CD4-positive, alpha-beta T cell (primary cell): ENCODE measurements at regions of chr13 and their contacts with region 1.

Region 1: GRCh38 chr13:84446972-84447639 is 564.8 kb upstream of the SLITRK1 start:
- DNase-seq: no peak
- ATAC-seq: no peak
- H3K4me3 ChIP-seq: no peak overlapping the region
- H3K4me3 Mint-ChIP-seq: no peak overlapping the region
- H3K27ac ChIP-seq: no peak overlapping the region
- H3K27ac Mint-ChIP-seq: no peak overlapping the region
- H3K4me1 ChIP-seq: no peaks in the 10 kb centered on the region
- H3K4me1 Mint-ChIP-seq: no peaks in the 10 kb centered on the region
- H3K27me3 ChIP-seq: no peaks in the 10 kb centered on the region
- H3K27me3 Mint-ChIP-seq: no peaks in the 10 kb centered on the region
- CTCF ChIP-seq: no peak

Region 2: DNA sequence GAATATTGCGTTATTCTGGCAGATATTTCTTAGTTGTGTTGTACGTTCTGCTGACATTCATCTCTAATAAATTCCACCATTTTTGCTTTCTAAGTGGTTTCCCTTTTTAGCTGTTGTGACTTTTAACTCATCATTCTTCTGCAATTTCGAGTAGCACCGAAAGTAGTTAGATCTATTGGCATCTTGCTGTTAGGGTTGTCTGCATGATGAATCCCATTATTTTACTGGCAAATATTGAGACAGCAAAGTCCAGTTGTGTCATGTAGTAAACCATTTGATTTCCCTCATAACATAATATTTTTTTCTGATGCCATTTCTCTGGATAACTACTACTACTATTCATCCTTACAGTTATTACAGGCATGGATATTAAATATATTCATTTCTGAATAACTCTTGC is 708.7 kb before region 1 on chr13:
- CTCF ChIA-PET with region 1: no interaction called
- POLR2A ChIA-PET with region 1: no interaction called
- intact Hi-C with region 1: no loop called
- DNase-seq: no peak
- ATAC-seq: no peak
- H3K4me3 ChIP-seq: no peak overlapping the region
- H3K4me3 Mint-ChIP-seq: no peak overlapping the region
- H3K27ac ChIP-seq: no peak overlapping the region
- H3K27ac Mint-ChIP-seq: no peak overlapping the region
- H3K4me1 ChIP-seq: no peaks in the 10 kb centered on the region
- H3K4me1 Mint-ChIP-seq: no peaks in the 10 kb centered on the region
- H3K27me3 ChIP-seq: no peaks in the 10 kb centered on the region
- H3K27me3 Mint-ChIP-seq: no peaks in the 10 kb centered on the region
- CTCF ChIP-seq: no peak

Region 3: GRCh38 chr13:84433024-84433423 is 14.1 kb before region 1 on chr13:
- CTCF ChIA-PET with region 1: no interaction called
- POLR2A ChIA-PET with region 1: no interaction called
- intact Hi-C with region 1: loop called in 1 of 2 experiments (anchors 1 kb)
- DNase-seq: no peak
- ATAC-seq: no peak
- H3K4me3 ChIP-seq: no peak overlapping the region
- H3K4me3 Mint-ChIP-seq: no peak overlapping the region
- H3K27ac ChIP-seq: no peak overlapping the region
- H3K27ac Mint-ChIP-seq: no peak overlapping the region
- H3K4me1 ChIP-seq: no peaks in the 10 kb centered on the region
- H3K4me1 Mint-ChIP-seq: no peaks in the 10 kb centered on the region
- H3K27me3 ChIP-seq: no peaks in the 10 kb centered on the region
- H3K27me3 Mint-ChIP-seq: no peaks in the 10 kb centered on the region
- CTCF ChIP-seq: no peak

Region 4: DNA sequence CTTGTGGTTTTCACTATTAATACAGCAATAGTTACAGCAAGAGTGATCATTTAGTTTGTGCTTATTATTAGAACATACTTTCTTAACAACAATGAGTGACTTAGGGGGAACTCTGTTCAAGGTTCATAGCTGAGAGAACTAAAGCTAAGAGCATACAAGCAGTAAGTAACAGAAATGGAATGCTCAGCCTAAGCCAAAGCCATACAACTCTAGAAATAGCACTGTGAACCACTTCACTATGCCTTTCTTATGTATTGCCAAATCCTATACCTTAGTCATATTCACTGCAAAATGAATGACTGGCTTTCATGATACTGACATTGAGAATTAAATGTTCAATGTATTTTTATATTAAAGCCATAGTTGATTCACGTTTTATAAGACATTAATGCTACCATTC is 34.9 kb after region 1 on chr13:
- CTCF ChIA-PET with region 1: no interaction called
- POLR2A ChIA-PET with region 1: no interaction called
- intact Hi-C with region 1: no loop called
- DNase-seq: no peak
- ATAC-seq: no peak
- H3K4me3 ChIP-seq: no peak overlapping the region
- H3K4me3 Mint-ChIP-seq: no peak overlapping the region
- H3K27ac ChIP-seq: no peak overlapping the region
- H3K27ac Mint-ChIP-seq: no peak overlapping the region
- H3K4me1 ChIP-seq: no peaks in the 10 kb centered on the region
- H3K4me1 Mint-ChIP-seq: no peaks in the 10 kb centered on the region
- H3K27me3 ChIP-seq: no peaks in the 10 kb centered on the region
- H3K27me3 Mint-ChIP-seq: no peaks in the 10 kb centered on the region
- CTCF ChIP-seq: no peak